ENCODE measurements at regions of chr10 and their contacts with region 1.

Region 1: DNA sequence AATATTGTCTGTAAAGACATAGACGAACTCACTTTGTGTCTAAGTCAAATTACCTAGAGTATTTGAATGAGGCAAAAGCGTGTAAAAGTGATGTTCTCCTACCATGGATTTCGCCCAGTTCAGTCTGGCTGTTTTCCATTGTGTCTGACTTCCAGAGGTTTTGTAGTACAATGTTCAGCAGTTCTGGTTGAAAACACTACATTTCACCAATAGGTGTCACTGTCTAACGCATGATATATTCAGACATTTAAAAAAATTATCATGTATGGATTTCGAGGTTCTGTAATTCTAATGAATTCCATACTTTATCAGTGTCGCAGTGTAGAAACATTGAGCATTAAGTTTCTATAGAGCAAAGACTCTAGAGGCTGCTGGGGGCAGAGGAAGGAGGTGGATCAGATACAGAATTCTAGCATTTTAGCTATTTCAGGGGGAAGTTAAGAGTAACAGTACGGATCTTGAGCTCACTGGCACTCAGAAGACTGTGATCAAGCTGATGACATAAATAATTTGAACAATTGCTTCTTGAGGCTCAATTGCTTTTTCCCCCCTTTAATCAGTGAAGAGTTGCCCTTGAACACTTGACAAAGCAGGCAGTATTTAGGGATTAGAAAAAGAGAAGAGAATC is 196.9 kb upstream of the RHOBTB1 start:
- DNase-seq: no peak
- ATAC-seq: no peak
- H3K4me3 Mint-ChIP-seq: no peak overlapping the region
- H3K27ac Mint-ChIP-seq: no peak overlapping the region
- H3K4me1 Mint-ChIP-seq: no peaks in the 10 kb centered on the region
- H3K27me3 Mint-ChIP-seq: no peaks in the 10 kb centered on the region

Region 2: DNA sequence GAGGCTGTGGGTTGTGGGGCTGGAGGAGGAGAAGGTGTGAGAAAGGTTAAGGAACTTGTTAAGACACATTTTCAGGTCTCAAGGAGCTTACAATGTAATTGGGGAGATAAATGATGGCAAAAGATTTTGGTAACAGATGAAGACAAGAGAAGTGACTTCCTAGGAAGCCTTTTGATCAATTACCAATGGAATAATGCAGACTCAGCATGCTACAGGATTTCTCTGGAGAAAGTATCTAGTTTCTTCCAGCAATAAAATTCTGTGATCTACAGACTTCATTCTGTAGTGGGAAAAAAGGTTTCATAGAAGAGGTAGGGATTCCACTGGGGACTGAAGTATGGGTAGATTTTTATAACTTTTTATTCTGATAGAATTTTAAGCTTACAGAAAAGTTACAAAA is 12.7 kb before region 1 on chr10:
- CTCF ChIA-PET with region 1: interaction called, 10 read pairs
- POLR2A ChIA-PET with region 1: no interaction called
- DNase-seq: no peak
- ATAC-seq: no peak
- H3K4me3 Mint-ChIP-seq: no peak overlapping the region
- H3K27ac Mint-ChIP-seq: no peak overlapping the region
- H3K4me1 Mint-ChIP-seq: peaks cover 5% of the 10 kb centered on the region
- H3K27me3 Mint-ChIP-seq: no peaks in the 10 kb centered on the region

Region 3: DNA sequence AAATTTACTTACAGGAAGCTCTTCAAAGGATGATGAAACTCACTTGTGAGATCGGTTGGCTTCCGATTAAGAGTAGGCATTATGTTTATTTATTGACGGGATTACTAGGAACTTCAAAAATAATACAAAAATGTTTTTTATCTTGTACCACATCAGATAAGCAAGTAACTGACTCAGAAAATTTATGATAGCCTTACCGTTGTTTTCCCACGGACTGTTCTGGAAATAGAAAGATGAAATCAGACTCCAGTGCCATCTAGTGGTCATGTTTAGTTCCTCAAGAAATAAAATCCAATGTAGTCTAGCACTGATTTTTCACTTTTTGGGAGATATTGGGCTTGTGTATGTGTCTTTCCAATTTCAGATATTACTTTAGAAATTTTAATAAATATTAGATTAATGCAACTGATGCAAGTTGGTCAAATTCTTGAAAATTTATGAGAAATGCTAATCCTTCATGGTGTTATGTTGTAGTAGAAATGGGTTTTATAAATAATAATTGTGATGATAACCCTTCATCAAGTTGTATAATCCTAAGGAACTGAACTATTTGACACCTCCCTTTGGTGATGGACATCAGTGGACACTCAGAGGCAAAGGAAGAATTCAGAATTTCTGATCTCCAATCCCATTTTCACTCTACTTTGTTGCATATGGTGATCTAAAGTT is 143.5 kb after region 1 on chr10:
- CTCF ChIA-PET with region 1: interaction called, 12 read pairs
- POLR2A ChIA-PET with region 1: no interaction called
- DNase-seq: no peak
- ATAC-seq: no peak
- H3K4me3 Mint-ChIP-seq: peak overlapping the region; percentile 42
- H3K27ac Mint-ChIP-seq: no peak overlapping the region
- H3K4me1 Mint-ChIP-seq: peaks cover 49% of the 10 kb centered on the region
- H3K27me3 Mint-ChIP-seq: peaks cover 10% of the 10 kb centered on the region

Region 4: GRCh38 chr10:61363006-61363405 is 222.1 kb after region 1 on chr10:
- CTCF ChIA-PET with region 1: no interaction called
- POLR2A ChIA-PET with region 1: no interaction called
- DNase-seq: no peak
- ATAC-seq: no peak
- H3K4me3 Mint-ChIP-seq: no peak overlapping the region
- H3K27ac Mint-ChIP-seq: no peak overlapping the region
- H3K4me1 Mint-ChIP-seq: no peaks in the 10 kb centered on the region
- H3K27me3 Mint-ChIP-seq: peaks cover 2% of the 10 kb centered on the region